CD4-positive, alpha-beta memory T cell (primary cell): ENCODE measurements at regions of chr1 and their contacts with region 1.

Region 1: GRCh38 chr1:66996018-66996682 is 57.8 kb downstream of the SLC35D1 start:
- DNase-seq: peak; percentile 50 to 63 (median 60)
- H3K4me3 ChIP-seq: no peak overlapping the region
- H3K4me3 Mint-ChIP-seq: no peak overlapping the region
- H3K27ac ChIP-seq: no peak overlapping the region
- H3K27ac Mint-ChIP-seq: peak overlapping the region in 1 of 7 donors; percentile 30
- H3K4me1 ChIP-seq: peaks cover 14% of the 10 kb centered on the region
- H3K4me1 Mint-ChIP-seq: peaks cover 10 to 21% (median 19%) of the 10 kb centered on the region in 4 donors
- H3K27me3 ChIP-seq: no peaks in the 10 kb centered on the region
- H3K27me3 Mint-ChIP-seq: no peaks in the 10 kb centered on the region

Region 2: DNA sequence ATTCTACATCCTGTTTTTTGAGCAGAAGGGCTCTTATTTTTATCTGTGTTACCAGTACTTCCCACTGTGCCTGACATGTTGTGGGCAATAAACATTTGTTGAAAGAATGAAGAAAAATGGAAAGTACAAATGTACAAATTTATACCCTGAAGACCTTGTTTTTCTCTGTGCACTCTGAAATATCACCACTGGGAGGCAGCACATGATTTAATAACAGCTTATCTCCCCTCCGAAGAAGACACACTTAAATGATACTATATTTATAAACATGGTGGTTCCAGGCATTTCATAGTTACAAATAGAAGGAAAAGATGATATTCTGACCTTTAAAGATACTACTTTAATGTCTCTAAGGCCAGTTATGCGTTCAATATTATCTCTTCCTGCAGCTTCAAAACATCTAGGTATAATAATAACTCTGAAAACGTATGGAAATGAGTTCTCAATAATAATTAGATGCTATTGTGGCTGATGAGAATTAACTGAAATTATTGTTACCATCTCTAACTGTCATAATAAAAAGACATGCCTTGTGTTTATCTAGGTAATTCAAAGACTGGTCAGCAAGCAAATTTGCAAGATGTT is 231.1 kb before region 1 on chr1:
- CTCF ChIA-PET with region 1: interaction called, 5 read pairs
- POLR2A ChIA-PET with region 1: interaction called, 3 read pairs
- intact Hi-C with region 1: loop called (anchors 1 kb)
- DNase-seq: peak; percentile 53 to 59 (median 54)
- H3K4me3 ChIP-seq: no peak overlapping the region
- H3K4me3 Mint-ChIP-seq: no peak overlapping the region
- H3K27ac ChIP-seq: no peak overlapping the region
- H3K27ac Mint-ChIP-seq: no peak overlapping the region
- H3K4me1 ChIP-seq: peaks cover 13% of the 10 kb centered on the region
- H3K4me1 Mint-ChIP-seq: peaks cover 13 to 17% (median 15%) of the 10 kb centered on the region in 4 donors
- H3K27me3 ChIP-seq: no peaks in the 10 kb centered on the region
- H3K27me3 Mint-ChIP-seq: no peaks in the 10 kb centered on the region

Region 3: GRCh38 chr1:66981679-66982078 is 14.5 kb before region 1 on chr1:
- CTCF ChIA-PET with region 1: interaction called, 16 read pairs
- POLR2A ChIA-PET with region 1: no interaction called
- intact Hi-C with region 1: no loop called
- DNase-seq: peak; percentile 55 to 72 (median 67)
- H3K4me3 ChIP-seq: peak overlapping the region in 1 of 2 donors; percentile 9
- H3K4me3 Mint-ChIP-seq: peak overlapping the region; percentile 2 to 80 (median 72)
- H3K27ac ChIP-seq: peak overlapping the region; percentile 61
- H3K27ac Mint-ChIP-seq: peak overlapping the region; percentile 53 to 94 (median 77)
- H3K4me1 ChIP-seq: peaks cover 25% of the 10 kb centered on the region
- H3K4me1 Mint-ChIP-seq: peaks cover 20 to 37% (median 22%) of the 10 kb centered on the region in 4 donors
- H3K27me3 ChIP-seq: no peaks in the 10 kb centered on the region
- H3K27me3 Mint-ChIP-seq: no peaks in the 10 kb centered on the region

Region 4: GRCh38 chr1:67013573-67013972 is 17.4 kb after region 1 on chr1:
- CTCF ChIA-PET with region 1: interaction called, 17 read pairs
- POLR2A ChIA-PET with region 1: no interaction called
- intact Hi-C with region 1: no loop called
- DNase-seq: no peak
- H3K4me3 ChIP-seq: no peak overlapping the region
- H3K4me3 Mint-ChIP-seq: no peak overlapping the region
- H3K27ac ChIP-seq: no peak overlapping the region
- H3K27ac Mint-ChIP-seq: peak overlapping the region in 2 of 7 donors; percentile 1 to 78
- H3K4me1 ChIP-seq: no peaks in the 10 kb centered on the region
- H3K4me1 Mint-ChIP-seq: peaks cover 0 to 5% (median 2%) of the 10 kb centered on the region in 4 donors
- H3K27me3 ChIP-seq: no peaks in the 10 kb centered on the region
- H3K27me3 Mint-ChIP-seq: no peaks in the 10 kb centered on the region

Region 5: DNA sequence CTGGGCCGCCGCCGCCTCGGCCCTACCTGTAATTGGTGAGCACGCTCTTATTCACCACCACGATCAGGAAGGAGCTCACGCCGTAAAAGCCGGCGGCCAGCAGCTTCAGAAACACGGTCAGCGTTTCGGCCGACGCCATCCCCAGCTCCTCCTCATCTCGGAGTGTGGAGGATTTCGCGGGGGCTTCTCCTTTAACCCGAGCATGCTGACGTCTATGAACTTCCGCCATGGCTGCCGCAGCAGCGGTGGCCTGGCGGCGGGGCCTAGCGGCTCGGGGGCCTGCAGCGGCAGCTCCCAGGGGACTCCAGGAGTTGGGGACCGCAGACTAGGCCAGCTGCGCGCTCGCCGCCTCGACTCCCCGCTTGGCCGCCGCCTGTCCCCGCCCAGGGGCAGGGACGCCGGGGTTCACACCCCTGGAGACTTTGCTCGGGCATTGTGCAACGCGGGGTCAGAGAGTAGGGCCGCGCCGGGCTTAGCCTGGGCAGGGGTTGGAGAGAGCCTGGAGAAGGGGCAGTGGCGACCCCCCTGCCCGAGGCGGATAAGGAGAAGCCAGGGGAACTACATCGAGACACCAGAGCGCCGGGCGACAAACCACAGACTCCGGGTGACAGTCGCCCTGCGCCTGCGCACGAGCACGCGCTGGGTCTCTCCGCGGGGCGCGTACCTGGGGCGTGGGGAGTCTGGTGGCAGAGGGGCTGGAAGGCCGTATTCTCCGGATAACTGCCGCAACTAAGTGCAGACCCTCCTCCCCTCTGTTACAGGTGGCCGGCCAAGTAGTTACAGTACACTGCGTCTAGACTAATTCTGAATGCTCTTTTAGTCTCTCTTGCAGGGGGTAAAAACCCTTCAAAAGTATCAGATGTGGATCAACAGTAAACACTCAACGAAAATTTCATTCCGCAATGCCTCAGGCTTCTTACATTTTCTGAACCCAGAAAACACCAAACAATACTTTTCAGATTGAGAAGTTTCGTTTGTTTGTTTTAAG is 57.9 kb after region 1 on chr1 and contains the start of gene SLC35D1:
- CTCF ChIA-PET with region 1: interaction called, 6 read pairs
- POLR2A ChIA-PET with region 1: interaction called, 5 read pairs
- intact Hi-C with region 1: loop called (anchors 5 kb)
- DNase-seq: peak; percentile 68 to 82 (median 77)
- H3K4me3 ChIP-seq: peak within 1 kb of the TSS; percentile 73 to 88
- H3K4me3 Mint-ChIP-seq: peak within 1 kb of the TSS; percentile 93 to 96 (median 95)
- H3K27ac ChIP-seq: peak within 1 kb of the TSS; percentile 91
- H3K27ac Mint-ChIP-seq: peak within 1 kb of the TSS; percentile 66 to 98 (median 97)
- H3K4me1 ChIP-seq: peaks cover 25% of the 10 kb centered on the region
- H3K4me1 Mint-ChIP-seq: peaks cover 21 to 38% (median 28%) of the 10 kb centered on the region in 4 donors
- H3K27me3 ChIP-seq: no peaks in the 10 kb centered on the region
- H3K27me3 Mint-ChIP-seq: no peaks in the 10 kb centered on the region
- total RNA-seq, gene SLC35D1: 16.9 to 17.7 TPM